ENCODE measurements at regions of chr9 and their contacts with region 1.

Region 1: GRCh38 chr9:385818-386398 is 171.2 kb downstream of the DOCK8 start:
- DNase-seq: peak; percentile 69
- H3K4me3 ChIP-seq: no peak overlapping the region
- H3K27ac ChIP-seq: no peak overlapping the region
- H3K4me1 ChIP-seq: no peaks in the 10 kb centered on the region
- H3K27me3 ChIP-seq: no peaks in the 10 kb centered on the region
- CTCF ChIP-seq: peak; percentile 74 to 87 (median 82)
- EP300 ChIP-seq: no peak
- POLR2A ChIP-seq: no peak

Region 2: GRCh38 chr9:613771-614347 is 228.0 kb after region 1 on chr9:
- intact Hi-C with region 1: loop called (anchors 10 kb)
- DNase-seq: peak; percentile 92
- H3K4me3 ChIP-seq: no peak overlapping the region
- H3K27ac ChIP-seq: peak overlapping the region; percentile 61 to 79 (median 72)
- H3K4me1 ChIP-seq: peaks cover 0 to 46% (median 34%) of the 10 kb centered on the region in 4 donors
- H3K27me3 ChIP-seq: no peaks in the 10 kb centered on the region
- CTCF ChIP-seq: peak; percentile 86 to 96 (median 90)
- EP300 ChIP-seq: no peak
- POLR2A ChIP-seq: no peak

Region 3: GRCh38 chr9:763692-764524 is 378.0 kb after region 1 on chr9:
- intact Hi-C with region 1: loop called (anchors 5 kb)
- DNase-seq: peak; percentile 86
- H3K4me3 ChIP-seq: peak overlapping the region in 3 of 4 donors; percentile 11 to 26 (median 25)
- H3K27ac ChIP-seq: peak overlapping the region in 1 of 4 donors; percentile 41
- H3K4me1 ChIP-seq: no peaks in the 10 kb centered on the region
- H3K27me3 ChIP-seq: no peaks in the 10 kb centered on the region
- CTCF ChIP-seq: peak; percentile 92 to 98 (median 94)
- EP300 ChIP-seq: no peak
- POLR2A ChIP-seq: no peak

Region 4: GRCh38 chr9:806285-807156 is 420.6 kb after region 1 on chr9:
- intact Hi-C with region 1: loop called (anchors 5 kb)
- DNase-seq: no peak
- H3K4me3 ChIP-seq: no peak overlapping the region
- H3K27ac ChIP-seq: no peak overlapping the region
- H3K4me1 ChIP-seq: peaks cover 0 to 13% (median 11%) of the 10 kb centered on the region in 4 donors
- H3K27me3 ChIP-seq: no peaks in the 10 kb centered on the region
- CTCF ChIP-seq: peak; percentile 18 to 61 (median 42)
- EP300 ChIP-seq: no peak
- POLR2A ChIP-seq: no peak

Region 5: GRCh38 chr9:1009101-1009707 is 623.3 kb after region 1 on chr9:
- intact Hi-C with region 1: loop called (anchors 5 kb)
- DNase-seq: peak; percentile 87
- H3K4me3 ChIP-seq: no peak overlapping the region
- H3K27ac ChIP-seq: no peak overlapping the region
- H3K4me1 ChIP-seq: peaks cover 0 to 6% (median 0%) of the 10 kb centered on the region in 4 donors
- H3K27me3 ChIP-seq: peaks cover 0 to 29% (median 0%) of the 10 kb centered on the region in 3 donors
- CTCF ChIP-seq: peak; percentile 69 to 96 (median 86)
- EP300 ChIP-seq: no peak
- POLR2A ChIP-seq: no peak